Esophagus muscularis mucosa (tissue), 4 donors: ENCODE measurements at regions of chr6 and their contacts with region 1.

Region 1: DNA sequence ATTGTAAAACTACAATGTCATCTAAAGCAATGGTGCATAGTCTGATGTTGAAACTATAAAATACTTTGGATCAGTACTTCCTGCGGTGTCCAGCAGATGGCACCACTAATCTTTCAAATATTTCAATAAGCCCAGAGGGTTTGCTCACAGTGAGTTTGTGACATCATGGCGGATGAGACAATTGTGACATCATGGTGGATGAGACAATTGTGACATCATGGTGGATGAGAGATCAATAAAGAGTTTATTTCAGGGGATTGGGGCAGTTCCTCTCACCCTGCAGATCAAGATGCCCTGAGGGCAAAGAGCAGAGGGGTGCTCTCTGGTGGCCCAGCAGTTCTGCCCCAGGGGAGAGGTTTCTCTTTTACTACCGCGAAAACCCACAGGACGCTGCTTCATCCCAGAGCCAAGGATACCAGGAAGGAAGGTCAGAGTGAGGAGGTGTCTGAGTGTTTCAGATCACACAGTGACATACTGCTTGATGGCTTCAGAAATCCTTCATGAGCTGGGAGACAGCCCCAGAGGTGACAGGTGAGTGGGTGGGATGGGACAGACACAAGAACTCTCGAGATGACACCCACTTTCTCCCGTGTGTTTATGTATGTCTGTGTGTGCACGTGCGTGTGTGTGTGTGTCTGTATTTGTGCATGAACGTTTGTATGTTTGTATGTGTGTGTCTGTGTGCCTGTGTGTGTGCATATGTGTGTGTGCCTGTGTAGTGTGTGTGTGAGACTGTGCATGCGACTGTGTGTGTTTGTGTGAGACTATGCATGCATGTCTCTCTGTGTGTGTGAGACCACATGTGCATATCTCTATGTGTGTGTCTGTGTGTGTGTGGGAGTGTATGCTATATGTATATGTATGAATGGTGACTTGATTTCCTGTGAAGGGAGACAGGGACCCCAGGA is 7.3 kb upstream of the ULBP2 start:
- DNase-seq: no peak
- H3K4me3 ChIP-seq: no peak overlapping the region
- H3K27ac ChIP-seq: no peak overlapping the region
- H3K4me1 ChIP-seq: peaks cover 11 to 15% (median 12%) of the 10 kb centered on the region in 4 donors
- H3K27me3 ChIP-seq: peaks cover 10 to 98% (median 55%) of the 10 kb centered on the region in 4 donors
- CTCF ChIP-seq: peak; percentile 81 to 86 (median 85)
- EP300 ChIP-seq: no peak
- POLR2A ChIP-seq: no peak

Region 2: DNA sequence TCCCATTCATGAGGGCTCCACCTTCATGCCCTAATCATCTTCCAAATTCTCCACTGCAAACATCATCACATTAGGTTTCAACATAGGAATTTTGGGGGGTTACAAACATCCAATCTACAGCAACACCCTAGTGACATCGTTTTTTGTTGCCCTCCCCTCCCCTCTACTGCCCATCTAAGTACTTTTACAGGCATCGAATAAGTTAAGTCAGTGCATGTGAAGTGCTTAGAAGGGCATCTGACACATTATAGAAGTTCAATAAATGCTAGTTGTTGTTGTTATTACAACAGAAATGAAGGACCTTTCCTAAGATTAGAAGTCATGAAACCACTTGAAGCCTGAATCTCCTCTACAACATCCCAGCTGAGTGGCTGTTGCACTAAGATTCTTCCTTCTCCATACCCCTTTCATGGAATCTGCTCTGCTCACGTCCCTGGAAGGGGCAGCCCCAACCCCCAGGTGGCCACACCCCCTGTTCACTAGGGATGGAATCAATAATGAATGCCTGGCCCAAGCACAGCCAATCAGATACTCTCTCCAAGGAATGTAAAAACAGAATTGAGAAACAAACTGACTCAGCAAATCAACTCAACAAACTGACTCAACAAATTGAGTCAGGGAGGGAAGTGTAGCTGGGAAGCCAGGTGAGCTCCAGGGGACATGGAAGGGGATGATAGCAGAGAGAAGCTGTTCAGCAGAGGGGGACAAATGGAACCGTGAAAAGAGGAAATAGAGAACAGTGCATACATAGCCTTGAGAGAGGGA is 66.4 kb before region 1 on chr6:
- intact Hi-C with region 1: no loop called
- DNase-seq: no peak
- H3K4me3 ChIP-seq: no peak overlapping the region
- H3K27ac ChIP-seq: no peak overlapping the region
- H3K4me1 ChIP-seq: peaks cover 7 to 10% (median 9%) of the 10 kb centered on the region in 4 donors
- H3K27me3 ChIP-seq: no peaks in the 10 kb centered on the region
- CTCF ChIP-seq: no peak
- EP300 ChIP-seq: no peak
- POLR2A ChIP-seq: no peak

Region 3: GRCh38 chr6:150016324-150017185 is 82.1 kb after region 1 on chr6:
- intact Hi-C with region 1: loop called (anchors 1 kb)
- DNase-seq: no peak
- H3K4me3 ChIP-seq: no peak overlapping the region
- H3K27ac ChIP-seq: no peak overlapping the region
- H3K4me1 ChIP-seq: peaks cover 0 to 20% (median 8%) of the 10 kb centered on the region in 4 donors
- H3K27me3 ChIP-seq: peaks cover 5 to 75% (median 42%) of the 10 kb centered on the region in 4 donors
- CTCF ChIP-seq: peak; percentile 73 to 83 (median 77)
- EP300 ChIP-seq: no peak
- POLR2A ChIP-seq: no peak